Left ventricle myocardium inferior (tissue), 1 donor: ENCODE measurements at regions of chr1 and their contacts with region 1.

Region 1: DNA sequence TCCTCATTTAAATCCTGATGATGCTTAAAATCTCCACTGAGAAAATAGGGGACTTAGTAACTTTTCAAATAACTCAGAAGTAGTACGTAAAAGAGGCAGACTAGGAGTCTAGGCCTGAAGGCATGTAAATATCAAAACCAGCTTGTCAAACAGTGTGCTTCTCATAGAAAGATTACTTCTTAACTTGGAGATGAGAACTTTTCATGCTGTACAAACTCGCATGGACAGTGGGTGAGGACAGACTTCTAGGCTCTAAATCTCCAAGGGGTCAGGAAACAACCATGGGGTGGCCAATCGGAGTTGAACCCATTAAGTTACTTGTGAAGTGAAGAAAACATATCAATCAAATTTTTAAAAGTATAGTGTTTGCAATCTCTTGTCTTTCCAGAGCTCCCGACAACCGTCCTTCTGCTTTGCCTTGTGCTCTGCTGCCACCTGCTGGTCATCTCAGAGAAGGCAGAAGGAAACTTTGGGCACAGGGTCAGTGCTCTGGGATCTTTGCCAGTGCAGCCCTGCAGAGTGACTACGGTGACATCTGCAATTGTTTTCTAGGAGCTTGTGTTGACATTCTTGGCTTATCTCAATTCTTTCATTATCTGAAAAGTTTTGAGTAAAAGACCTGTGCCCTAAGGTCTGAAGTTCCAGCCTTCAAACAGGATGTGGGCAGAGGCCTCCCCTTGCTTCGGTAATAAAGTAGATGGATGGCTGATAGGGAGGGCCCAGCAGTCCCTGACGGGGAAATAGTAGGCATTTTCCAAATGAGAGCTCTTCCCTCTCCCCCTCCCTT is 105.1 kb upstream of the PDE4B start:
- DNase-seq: peak; percentile 84
- H3K4me3 ChIP-seq: no peak overlapping the region
- H3K27ac ChIP-seq: peak overlapping the region; percentile 2
- H3K4me1 ChIP-seq: peaks cover 32% of the 10 kb centered on the region
- H3K27me3 ChIP-seq: peaks cover 8% of the 10 kb centered on the region
- CTCF ChIP-seq: peak; percentile 97

Region 2: GRCh38 chr1:65235867-65236805 is 451.5 kb before region 1 on chr1:
- intact Hi-C with region 1: loop called (anchors 5 kb)
- DNase-seq: no peak
- H3K4me3 ChIP-seq: no peak overlapping the region
- H3K27ac ChIP-seq: no peak overlapping the region
- H3K4me1 ChIP-seq: peaks cover 13% of the 10 kb centered on the region
- H3K27me3 ChIP-seq: no peaks in the 10 kb centered on the region
- CTCF ChIP-seq: peak; percentile 70

Region 3: GRCh38 chr1:65431111-65431705 is 256.4 kb before region 1 on chr1:
- intact Hi-C with region 1: loop called (anchors 5 kb)
- DNase-seq: no peak
- H3K4me3 ChIP-seq: no peak overlapping the region
- H3K27ac ChIP-seq: peak overlapping the region; percentile 73
- H3K4me1 ChIP-seq: peaks cover 32% of the 10 kb centered on the region
- H3K27me3 ChIP-seq: no peaks in the 10 kb centered on the region
- CTCF ChIP-seq: peak; percentile 71

Region 4: DNA sequence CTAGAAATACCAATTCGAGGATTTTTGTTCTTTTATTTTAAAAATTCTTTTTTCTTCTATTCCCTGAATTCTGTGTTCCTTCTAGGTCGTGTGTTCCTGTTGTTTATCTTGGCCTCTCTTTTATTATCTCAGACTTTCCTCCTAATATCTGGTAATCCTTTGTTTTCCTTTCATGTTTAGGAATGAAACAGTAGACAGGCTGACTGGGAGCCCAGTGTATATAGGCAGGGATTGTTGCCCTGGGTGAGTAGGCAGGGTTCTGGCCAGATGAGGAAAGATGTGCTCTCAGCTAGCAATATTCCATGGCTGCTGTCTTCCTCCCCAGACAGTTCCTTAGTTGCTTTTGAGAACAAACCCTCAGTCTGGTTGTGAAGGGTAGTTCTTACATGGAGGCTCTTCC is 56.8 kb before region 1 on chr1:
- intact Hi-C with region 1: no loop called
- DNase-seq: no peak
- H3K4me3 ChIP-seq: no peak overlapping the region
- H3K27ac ChIP-seq: no peak overlapping the region
- H3K4me1 ChIP-seq: no peaks in the 10 kb centered on the region
- H3K27me3 ChIP-seq: no peaks in the 10 kb centered on the region
- CTCF ChIP-seq: no peak